CD8-positive, alpha-beta T cell (primary cell): ENCODE measurements at regions of chr18 and their contacts with region 1.

Region 1: GRCh38 chr18:35240664-35241447 is at the start of gene ZNF397:
- DNase-seq: peak; percentile 85 to 97 (median 96)
- ATAC-seq: peak; percentile 96
- H3K4me3 ChIP-seq: peak within 1 kb of the TSS; percentile 87 to 96
- H3K4me3 Mint-ChIP-seq: peak within 1 kb of the TSS; percentile 96
- H3K27ac ChIP-seq: peak within 1 kb of the TSS; percentile 94 to 98
- H3K27ac Mint-ChIP-seq: peak within 1 kb of the TSS; percentile 97
- H3K4me1 ChIP-seq: peaks cover 18% of the 10 kb centered on the region
- H3K4me1 Mint-ChIP-seq: peaks cover 39% of the 10 kb centered on the region
- H3K27me3 ChIP-seq: no peaks in the 10 kb centered on the region
- H3K27me3 Mint-ChIP-seq: no peaks in the 10 kb centered on the region
- CTCF ChIP-seq: no peak
- total RNA-seq, gene ZNF397: 6.7 to 6.8 TPM

Region 2: DNA sequence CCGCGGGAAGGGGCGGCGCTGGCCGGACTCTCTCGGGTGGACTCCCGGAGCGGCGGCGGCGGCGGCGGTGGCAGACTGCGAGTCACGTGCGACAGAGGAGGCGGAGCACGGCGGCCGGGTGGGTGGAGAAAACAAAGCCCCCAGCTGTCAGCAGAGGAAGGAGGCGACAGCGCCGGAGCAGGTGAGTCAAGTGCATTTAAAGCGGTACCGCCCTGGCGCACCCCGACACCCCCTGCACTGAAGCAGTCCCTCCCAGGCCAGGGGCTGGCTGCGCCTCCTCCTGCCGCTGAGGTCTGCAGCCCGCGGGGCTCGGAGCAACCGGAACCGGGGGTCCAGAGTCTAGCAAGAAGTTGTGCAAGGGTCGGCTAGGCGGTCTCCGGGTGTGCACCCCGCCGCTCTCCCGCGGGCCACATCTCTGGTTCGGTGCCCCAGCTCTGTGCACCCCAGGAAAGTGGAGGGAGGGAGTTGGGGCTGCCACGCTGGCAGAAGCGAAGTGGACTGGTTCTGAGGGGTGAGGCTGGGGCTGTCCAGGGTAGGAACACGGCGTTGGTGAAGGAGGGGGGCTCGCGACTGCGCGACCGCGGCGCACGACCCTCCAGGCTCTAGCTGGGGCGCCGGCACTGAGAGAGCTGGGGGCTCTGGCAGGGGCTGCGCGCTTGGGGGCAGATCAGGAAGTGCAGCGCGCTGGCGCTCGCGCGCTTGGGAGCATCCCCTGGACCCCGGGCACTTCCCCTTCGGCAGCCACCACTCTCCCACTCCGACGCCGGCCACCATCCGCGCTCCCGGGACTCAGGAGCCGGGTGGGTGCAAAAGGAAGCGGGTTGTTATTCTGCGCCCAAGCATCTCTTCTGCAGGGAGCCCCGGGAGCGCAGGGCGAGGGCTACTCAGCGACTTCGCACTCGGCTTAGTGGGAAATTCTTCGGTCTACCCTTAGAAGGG is 263.7 kb before region 1 on chr18:
- CTCF ChIA-PET with region 1: no interaction called
- POLR2A ChIA-PET with region 1: no interaction called
- intact Hi-C with region 1: loop called (anchors 2 to 5 kb)
- DNase-seq: peak; percentile 55 to 89 (median 85)
- ATAC-seq: peak; percentile 81
- H3K4me3 ChIP-seq: peak overlapping the region; percentile 87 to 93
- H3K4me3 Mint-ChIP-seq: peak overlapping the region; percentile 96
- H3K27ac ChIP-seq: peak overlapping the region in 1 of 2 experiments; percentile 35
- H3K27ac Mint-ChIP-seq: peak overlapping the region; percentile 70
- H3K4me1 ChIP-seq: peaks cover 11% of the 10 kb centered on the region
- H3K4me1 Mint-ChIP-seq: peaks cover 26% of the 10 kb centered on the region
- H3K27me3 ChIP-seq: no peaks in the 10 kb centered on the region
- H3K27me3 Mint-ChIP-seq: no peaks in the 10 kb centered on the region
- CTCF ChIP-seq: no peak

Region 3: GRCh38 chr18:35267161-35267651 is 26.4 kb after region 1 on chr18:
- CTCF ChIA-PET with region 1: interaction called, 3 read pairs
- POLR2A ChIA-PET with region 1: interaction called, 22 read pairs
- intact Hi-C with region 1: loop called (anchors 1 kb)
- DNase-seq: peak; percentile 44 to 86 (median 74)
- ATAC-seq: peak; percentile 84
- H3K4me3 ChIP-seq: peak overlapping the region; percentile 77 to 84
- H3K4me3 Mint-ChIP-seq: peak overlapping the region; percentile 97
- H3K27ac ChIP-seq: peak overlapping the region; percentile 69 to 87
- H3K27ac Mint-ChIP-seq: peak overlapping the region; percentile 97
- H3K4me1 ChIP-seq: peaks cover 7% of the 10 kb centered on the region
- H3K4me1 Mint-ChIP-seq: peaks cover 26% of the 10 kb centered on the region
- H3K27me3 ChIP-seq: no peaks in the 10 kb centered on the region
- H3K27me3 Mint-ChIP-seq: no peaks in the 10 kb centered on the region
- CTCF ChIP-seq: no peak

Region 4: GRCh38 chr18:35376742-35377695 is 136.2 kb after region 1 on chr18 and contains the start of gene ZNF396:
- CTCF ChIA-PET with region 1: no interaction called
- POLR2A ChIA-PET with region 1: no interaction called
- intact Hi-C with region 1: loop called (anchors 1 to 10 kb)
- DNase-seq: peak; percentile 31 to 84 (median 63)
- ATAC-seq: peak; percentile 74
- H3K4me3 ChIP-seq: peak within 1 kb of the TSS; percentile 74 to 75
- H3K4me3 Mint-ChIP-seq: peak within 1 kb of the TSS; percentile 83
- H3K27ac ChIP-seq: peak within 1 kb of the TSS; percentile 12 to 31
- H3K27ac Mint-ChIP-seq: peak within 1 kb of the TSS; percentile 11
- H3K4me1 ChIP-seq: peaks cover 4% of the 10 kb centered on the region
- H3K4me1 Mint-ChIP-seq: peaks cover 9% of the 10 kb centered on the region
- H3K27me3 ChIP-seq: no peaks in the 10 kb centered on the region
- H3K27me3 Mint-ChIP-seq: no peaks in the 10 kb centered on the region
- CTCF ChIP-seq: no peak
- total RNA-seq, gene ZNF396: not detected

Region 5: DNA sequence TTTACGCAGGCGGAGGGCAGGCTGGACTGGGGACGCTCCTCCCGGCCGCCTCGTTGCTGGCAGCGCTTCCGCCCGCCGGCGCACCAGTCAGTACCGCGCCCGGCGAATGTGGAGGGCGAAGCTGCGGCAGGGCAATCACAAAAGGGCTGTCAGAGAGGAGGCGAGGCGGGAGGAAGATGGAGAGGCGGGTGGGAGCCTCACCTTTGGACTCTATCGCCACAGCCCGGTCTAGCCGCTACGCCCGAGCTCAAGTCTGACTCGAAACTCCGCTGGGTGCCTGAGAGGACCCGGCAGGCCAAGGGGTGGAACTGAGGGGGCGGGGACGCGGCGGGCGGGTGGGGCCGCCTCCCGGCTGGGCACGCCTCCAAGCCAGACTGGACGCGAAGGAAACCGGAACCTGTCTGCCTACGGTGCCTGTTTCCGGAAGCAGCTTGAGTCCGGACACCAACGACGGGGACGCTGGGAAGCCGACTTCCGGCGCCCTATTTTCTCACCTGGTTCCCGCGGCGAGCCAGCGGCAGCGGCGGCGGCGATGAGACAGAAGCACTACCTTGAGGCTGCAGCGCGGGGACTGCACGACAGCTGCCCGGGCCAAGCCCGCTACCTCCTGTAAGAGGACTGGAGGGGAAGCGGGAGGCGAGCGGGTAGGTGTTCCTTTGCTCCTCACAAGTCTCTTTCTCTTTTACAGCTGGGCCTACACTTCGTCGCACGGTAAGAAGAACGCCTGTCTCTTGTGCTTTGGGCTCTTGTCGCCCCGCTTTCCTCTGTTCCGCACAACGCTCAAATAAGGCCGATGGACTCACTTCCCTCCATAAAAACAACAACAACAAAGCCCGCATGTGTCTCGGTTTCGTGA is 731.6 kb after region 1 on chr18 and contains the start of gene RMP24:
- CTCF ChIA-PET with region 1: no interaction called
- POLR2A ChIA-PET with region 1: no interaction called
- intact Hi-C with region 1: loop called (anchors 1 to 5 kb)
- DNase-seq: peak; percentile 88 to 97 (median 93)
- ATAC-seq: peak; percentile 84
- H3K4me3 ChIP-seq: peak within 1 kb of the TSS; percentile 60 to 89
- H3K4me3 Mint-ChIP-seq: peak within 1 kb of the TSS; percentile 94
- H3K27ac ChIP-seq: peak within 1 kb of the TSS; percentile 57 to 90
- H3K27ac Mint-ChIP-seq: peak within 1 kb of the TSS; percentile 98
- H3K4me1 ChIP-seq: peaks cover 35% of the 10 kb centered on the region
- H3K4me1 Mint-ChIP-seq: peaks cover 65% of the 10 kb centered on the region
- H3K27me3 ChIP-seq: no peaks in the 10 kb centered on the region
- H3K27me3 Mint-ChIP-seq: no peaks in the 10 kb centered on the region
- CTCF ChIP-seq: no peak

Region 6: DNA sequence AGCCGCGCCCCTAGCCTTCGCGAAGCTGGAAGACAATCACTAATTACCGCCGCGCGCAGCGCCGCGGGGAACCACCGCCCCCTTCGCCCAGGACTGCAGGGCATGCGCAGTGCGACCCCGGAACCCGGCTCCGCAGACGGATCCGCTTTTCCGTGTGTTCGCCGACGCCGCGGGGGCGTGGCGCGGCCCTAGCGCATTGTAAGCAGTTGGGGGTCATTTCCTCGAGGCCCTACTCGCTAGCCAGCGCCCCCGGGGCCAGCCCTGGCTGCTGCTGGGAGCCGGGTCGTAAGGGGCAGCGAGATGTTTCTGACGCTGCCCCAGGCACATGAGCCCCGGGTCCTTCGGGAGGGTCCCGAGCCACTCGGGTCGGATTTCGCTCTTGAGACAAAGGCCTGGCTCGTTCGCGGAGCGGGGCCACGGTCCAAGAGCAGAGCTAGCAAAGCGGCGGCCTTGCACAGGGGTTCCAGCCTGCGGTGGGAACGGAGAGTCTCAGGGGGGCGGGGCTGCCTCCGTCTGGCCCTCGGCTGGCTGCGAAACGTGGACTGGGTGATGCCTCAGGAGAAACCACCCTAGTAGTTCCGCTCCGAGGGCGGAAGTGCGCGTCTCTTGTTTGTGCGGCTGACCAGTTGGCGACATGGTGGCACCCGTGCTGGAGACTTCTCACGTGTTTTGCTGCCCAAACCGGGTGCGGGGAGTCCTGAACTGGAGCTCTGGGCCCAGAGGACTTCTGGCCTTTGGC is 888.6 kb after region 1 on chr18 and contains the starts of genes ELP2 and SLC39A6:
- CTCF ChIA-PET with region 1: no interaction called
- POLR2A ChIA-PET with region 1: no interaction called
- intact Hi-C with region 1: loop called in 1 of 2 experiments (anchors 10 kb)
- DNase-seq: peak; percentile 88 to 98 (median 96)
- ATAC-seq: peak; percentile 87
- H3K4me3 ChIP-seq: peak within 1 kb of the TSS; percentile 97 to 100
- H3K4me3 Mint-ChIP-seq: peak within 1 kb of the TSS; percentile 95
- H3K27ac ChIP-seq: peak within 1 kb of the TSS; percentile 94 to 98
- H3K27ac Mint-ChIP-seq: peak within 1 kb of the TSS; percentile 98
- H3K4me1 ChIP-seq: peaks cover 47% of the 10 kb centered on the region
- H3K4me1 Mint-ChIP-seq: peaks cover 68% of the 10 kb centered on the region
- H3K27me3 ChIP-seq: no peaks in the 10 kb centered on the region
- H3K27me3 Mint-ChIP-seq: no peaks in the 10 kb centered on the region
- CTCF ChIP-seq: no peak
- total RNA-seq, gene ELP2: 212 to 222 TPM
- total RNA-seq, gene SLC39A6: 12.3 to 14.4 TPM